ENCODE measurements at regions of chrX and their contacts with region 1.

Region 1: DNA sequence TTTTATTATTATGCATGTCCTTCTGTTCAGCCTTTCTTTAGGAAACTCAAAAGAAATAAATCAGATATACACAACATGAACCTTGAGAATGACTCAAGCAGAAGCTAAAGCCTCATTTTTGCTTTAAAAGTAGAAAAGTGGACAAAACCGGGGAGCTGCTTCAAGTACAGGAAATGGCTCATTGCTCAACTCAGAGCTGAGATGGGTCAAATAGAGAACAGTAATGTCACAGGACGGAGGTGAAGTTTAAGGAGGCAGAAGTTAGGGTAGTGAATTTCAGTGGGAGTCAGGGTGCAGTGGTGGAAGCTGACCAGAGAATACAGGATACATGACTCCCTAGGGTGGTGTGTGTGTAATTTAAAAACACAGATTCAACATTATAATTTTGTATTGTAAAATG is 22.2 kb downstream of the PHKA2 start:
- DNase-seq: no peak
- H3K4me3 ChIP-seq: no peak overlapping the region
- H3K27ac ChIP-seq: no peak overlapping the region
- H3K4me1 ChIP-seq: no peaks in the 10 kb centered on the region
- H3K27me3 ChIP-seq: no peaks in the 10 kb centered on the region
- CTCF ChIP-seq: no peak

Region 2: DNA sequence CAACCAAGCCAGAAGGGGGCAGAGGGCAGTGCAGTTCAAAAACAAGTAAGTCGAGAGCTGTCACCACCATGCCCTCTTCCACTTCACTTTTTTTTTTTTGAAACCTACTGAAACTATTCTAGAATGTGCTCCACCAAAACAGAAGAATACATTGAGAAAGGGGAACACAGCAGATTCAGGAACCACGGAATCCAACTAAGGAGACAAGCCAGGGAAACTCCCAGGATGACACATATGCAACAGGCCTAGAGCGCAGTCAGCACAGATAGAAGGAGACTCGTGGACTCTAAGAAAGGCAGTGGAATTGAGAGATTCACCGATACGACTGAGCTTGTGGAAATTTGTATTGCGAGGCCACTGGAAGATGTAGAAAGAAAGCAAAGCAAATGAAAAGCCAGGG is 43.9 kb before region 1 on chrX:
- CTCF ChIA-PET with region 1: no interaction called
- dilution Hi-C with region 1: no loop called
- in situ Hi-C with region 1: no loop called
- intact Hi-C with region 1: no loop called
- DNase-seq: no peak
- H3K4me3 ChIP-seq: no peak overlapping the region
- H3K27ac ChIP-seq: no peak overlapping the region
- H3K4me1 ChIP-seq: no peaks in the 10 kb centered on the region
- H3K27me3 ChIP-seq: no peaks in the 10 kb centered on the region
- CTCF ChIP-seq: no peak

Region 3: DNA sequence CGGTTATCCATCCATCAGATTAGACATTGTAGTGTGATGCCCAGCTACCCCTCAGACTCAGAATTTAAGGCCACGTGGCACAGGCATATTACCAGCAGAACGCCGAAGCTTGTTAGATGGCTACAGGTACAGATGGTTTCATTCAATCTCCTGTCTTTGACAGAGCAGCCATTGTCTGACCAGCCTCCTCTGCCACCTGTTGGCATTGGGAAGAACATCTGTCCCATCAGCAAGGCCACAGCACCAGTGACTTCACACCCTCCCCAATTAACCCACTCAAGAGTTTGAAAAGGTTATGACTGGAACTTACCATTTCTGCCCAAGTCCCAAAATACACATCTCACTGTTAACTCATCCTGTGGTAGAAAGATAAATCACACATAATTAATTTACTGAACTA is 44.2 kb after region 1 on chrX:
- CTCF ChIA-PET with region 1: no interaction called
- dilution Hi-C with region 1: no loop called
- in situ Hi-C with region 1: no loop called
- intact Hi-C with region 1: no loop called
- DNase-seq: no peak
- H3K4me3 ChIP-seq: no peak overlapping the region
- H3K27ac ChIP-seq: no peak overlapping the region
- H3K4me1 ChIP-seq: no peaks in the 10 kb centered on the region
- H3K27me3 ChIP-seq: no peaks in the 10 kb centered on the region
- CTCF ChIP-seq: peak in 1 of 2 donors; percentile 45

Region 4: GRCh38 chrX:19064175-19064574 is 102.5 kb after region 1 on chrX:
- CTCF ChIA-PET with region 1: no interaction called
- dilution Hi-C with region 1: no loop called
- in situ Hi-C with region 1: no loop called
- intact Hi-C with region 1: no loop called
- DNase-seq: no peak
- H3K4me3 ChIP-seq: no peak overlapping the region
- H3K27ac ChIP-seq: no peak overlapping the region
- H3K4me1 ChIP-seq: no peaks in the 10 kb centered on the region
- H3K27me3 ChIP-seq: no peaks in the 10 kb centered on the region
- CTCF ChIP-seq: no peak

Region 5: GRCh38 chrX:19214311-19214710 is 252.6 kb after region 1 on chrX:
- CTCF ChIA-PET with region 1: interaction called, 22 read pairs
- dilution Hi-C with region 1: no loop called
- in situ Hi-C with region 1: no loop called
- intact Hi-C with region 1: no loop called
- DNase-seq: no peak
- H3K4me3 ChIP-seq: no peak overlapping the region
- H3K27ac ChIP-seq: no peak overlapping the region
- H3K4me1 ChIP-seq: no peaks in the 10 kb centered on the region
- H3K27me3 ChIP-seq: no peaks in the 10 kb centered on the region
- CTCF ChIP-seq: no peak

Region 6: GRCh38 chrX:19256986-19257385 is 295.3 kb after region 1 on chrX:
- CTCF ChIA-PET with region 1: interaction called, 11 read pairs
- dilution Hi-C with region 1: no loop called
- in situ Hi-C with region 1: no loop called
- intact Hi-C with region 1: no loop called
- DNase-seq: no peak
- H3K4me3 ChIP-seq: no peak overlapping the region
- H3K27ac ChIP-seq: no peak overlapping the region
- H3K4me1 ChIP-seq: no peaks in the 10 kb centered on the region
- H3K27me3 ChIP-seq: no peaks in the 10 kb centered on the region
- CTCF ChIP-seq: no peak

Measured in mammary epithelial cell (primary cell).